ENCODE measurements at regions of chr3 and their contacts with region 1.

Region 1: DNA sequence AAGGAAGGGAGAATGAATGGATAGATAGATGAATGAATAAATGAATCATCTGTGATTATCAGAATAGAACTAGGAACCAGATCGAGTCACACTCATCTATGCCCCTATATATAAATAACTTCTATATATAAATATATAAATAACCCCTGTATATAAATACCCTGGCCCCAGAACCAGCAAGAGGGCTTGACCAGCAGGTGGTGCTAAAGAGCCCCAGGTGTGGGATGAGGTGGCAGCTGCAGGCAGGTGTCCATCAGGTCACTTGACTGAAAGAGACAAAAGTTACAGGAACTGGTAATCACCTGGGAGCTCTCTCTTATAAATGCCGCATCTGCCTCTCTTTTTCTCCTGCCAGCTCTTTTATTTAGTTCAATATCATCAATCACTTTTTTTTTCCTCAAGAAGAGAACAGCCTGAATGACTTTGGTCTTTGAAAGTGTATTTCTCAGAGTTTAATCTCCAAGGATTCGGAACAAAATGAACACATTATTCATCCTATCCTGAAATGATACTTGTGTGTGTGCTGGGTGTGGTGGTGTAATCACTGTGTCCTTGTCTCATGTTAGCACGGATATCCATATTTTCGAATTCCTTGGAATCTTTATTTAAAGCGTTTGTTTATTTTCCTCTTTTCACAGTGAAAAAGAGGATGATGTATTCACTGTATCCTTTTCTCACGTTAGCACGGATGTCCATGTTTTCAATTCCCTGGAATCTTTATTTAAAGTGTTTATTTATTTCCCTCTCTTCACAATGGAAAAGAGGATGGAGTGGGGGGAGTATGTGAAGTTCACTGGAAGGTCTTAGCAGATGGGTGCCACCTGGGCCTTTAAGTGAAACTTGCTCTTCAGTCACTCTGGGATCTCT is 35.4 kb upstream of the ATG7 start:
- DNase-seq: peak; percentile 60 to 63
- ATAC-seq: peak; percentile 80 to 88; a peak in 5 of 6 replicates
- H3K4me3 ChIP-seq: no peak overlapping the region
- H3K27ac ChIP-seq: no peak overlapping the region
- H3K4me1 ChIP-seq: no peaks in the 10 kb centered on the region
- CTCF ChIP-seq: peak; percentile 91
- EP300 ChIP-seq: no peak
- POLR2A ChIP-seq: no peak
- RAD21 ChIP-seq: peak; percentile 71 to 74

Region 2: DNA sequence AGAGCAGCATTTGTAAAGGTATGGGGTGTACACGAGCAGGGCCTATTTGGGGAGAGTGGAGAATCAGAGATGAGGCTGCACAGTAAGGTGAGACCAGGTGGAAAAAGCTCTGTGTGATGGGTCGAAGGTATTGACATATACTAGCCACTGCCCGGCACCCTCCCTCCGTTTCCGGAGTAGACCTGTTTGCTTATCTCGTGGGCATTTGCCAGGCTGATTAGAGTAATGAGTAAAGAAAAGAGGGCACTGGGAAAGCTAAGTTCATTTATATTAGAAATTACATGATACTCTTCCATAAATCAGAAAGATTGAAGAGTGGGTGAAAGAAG is 10.8 kb before region 1 on chr3:
- CTCF ChIA-PET with region 1: interaction called, 13 read pairs
- POLR2A ChIA-PET with region 1: no interaction called
- DNase-seq: no peak
- ATAC-seq: peak; percentile 74 to 77
- H3K4me3 ChIP-seq: peak overlapping the region; percentile 64
- H3K27ac ChIP-seq: peak overlapping the region; percentile 90 to 92
- H3K4me1 ChIP-seq: peaks cover 6% of the 10 kb centered on the region; the same call in 1 of the 3 replicates
- CTCF ChIP-seq: no peak
- EP300 ChIP-seq: no peak
- POLR2A ChIP-seq: no peak
- RAD21 ChIP-seq: no peak

Region 3: GRCh38 chr3:11465744-11466616 is 229.2 kb after region 1 on chr3:
- CTCF ChIA-PET with region 1: no interaction called
- POLR2A ChIA-PET with region 1: no interaction called
- DNase-seq: no peak
- ATAC-seq: no peak
- H3K4me3 ChIP-seq: no peak overlapping the region
- H3K27ac ChIP-seq: no peak overlapping the region
- H3K4me1 ChIP-seq: no peaks in the 10 kb centered on the region
- CTCF ChIP-seq: no peak
- EP300 ChIP-seq: no peak
- POLR2A ChIP-seq: no peak
- RAD21 ChIP-seq: no peak